Posterior cingulate gyrus (tissue), 11 donors: ENCODE measurements at regions of chr11 and their contacts with region 1.

Region 1: GRCh38 chr11:68030318-68031138 is at the start of gene NDUFS8:
- DNase-seq: peak; percentile 90 to 99 (median 98)

Region 2: GRCh38 chr11:67665541-67666362 is 364.8 kb before region 1 on chr11:
- intact Hi-C with region 1: no loop called
- DNase-seq: peak in 1 of 10 donors; percentile 60

Region 3: DNA sequence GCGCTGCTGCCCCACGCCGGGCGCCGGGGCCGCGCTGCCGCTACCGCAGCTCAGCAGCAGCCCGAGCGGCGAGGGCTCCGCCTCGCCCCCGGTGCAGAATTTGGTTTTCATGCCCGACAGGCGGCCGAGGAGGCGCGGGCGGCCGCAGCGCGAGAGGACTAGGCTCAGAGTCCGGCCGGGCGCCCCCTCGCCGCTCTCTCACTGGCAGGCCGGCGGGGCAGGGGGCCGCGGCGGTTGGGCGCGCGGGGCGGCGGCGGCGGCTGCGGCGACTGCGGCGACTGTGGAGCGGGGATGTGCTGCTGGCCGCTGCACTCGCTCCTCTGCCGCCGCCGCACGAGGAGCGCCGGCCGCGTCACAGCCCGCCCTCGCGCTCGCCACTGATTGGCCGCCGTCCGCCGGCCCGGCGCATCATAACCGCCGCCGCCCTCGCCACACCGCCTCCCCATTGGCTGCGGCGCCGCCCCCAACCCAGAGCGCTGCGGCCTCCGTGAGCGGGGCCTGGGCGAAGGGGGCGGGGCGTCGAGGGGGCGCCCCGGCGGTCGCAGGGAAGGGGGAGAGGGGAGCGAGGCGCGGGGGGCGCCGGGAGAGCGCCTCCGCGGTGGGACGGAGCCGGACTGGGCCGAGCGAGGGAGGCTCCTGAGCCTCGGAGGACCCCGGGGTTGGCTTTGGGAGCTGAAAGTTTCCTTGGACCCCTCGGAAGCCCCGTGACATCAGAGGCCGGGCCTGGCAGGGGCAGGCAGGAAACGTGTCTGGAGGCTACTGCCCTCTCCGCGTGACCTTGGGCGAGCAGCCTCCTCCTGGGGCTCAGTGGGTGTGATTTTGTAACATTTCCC is 90.8 kb after region 1 on chr11 and contains the start of gene CHKA:
- intact Hi-C with region 1: loop called (anchors 10 kb)
- DNase-seq: peak; percentile 85 to 99 (median 94)

Region 4: DNA sequence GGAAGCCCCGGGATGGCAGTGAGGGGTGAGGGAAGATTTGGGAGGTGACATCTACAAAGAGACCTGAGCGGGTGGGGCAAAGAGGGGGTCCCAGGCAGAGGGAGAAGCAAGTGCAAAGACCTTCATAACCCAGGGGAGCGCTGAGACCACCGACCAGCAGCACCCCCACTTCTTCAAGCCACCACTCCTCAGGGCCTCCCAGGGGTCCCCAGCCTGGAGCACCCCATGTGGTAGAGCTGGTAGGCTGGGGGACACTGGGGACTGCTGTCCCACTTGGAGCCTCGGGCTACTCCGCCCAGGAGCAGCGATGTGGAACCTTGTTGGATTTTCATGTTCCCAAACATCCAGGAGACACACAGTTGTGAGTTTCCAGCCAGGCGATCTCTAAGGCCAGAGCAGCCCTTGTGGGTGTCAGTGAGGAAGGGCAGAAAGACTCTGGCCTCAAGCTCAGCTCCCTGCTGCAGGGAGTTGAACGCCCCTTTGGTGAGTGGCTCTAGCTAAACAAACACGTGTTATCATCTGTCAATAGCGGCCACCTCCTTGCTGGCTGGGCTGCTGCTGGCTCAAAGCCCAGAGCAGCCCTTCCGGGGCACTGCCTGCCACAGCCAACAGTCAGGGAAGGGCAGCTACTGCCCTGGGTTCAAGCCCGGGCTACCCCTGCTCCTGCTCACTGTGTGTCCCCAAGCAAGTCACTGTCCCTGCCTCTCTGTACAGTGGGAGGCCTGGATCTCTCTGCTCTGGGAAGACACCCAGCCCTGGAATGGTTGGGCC is 116.4 kb after region 1 on chr11:
- intact Hi-C with region 1: no loop called
- DNase-seq: peak in 4 of 10 donors; percentile 34 to 84 (median 60)

Region 5: DNA sequence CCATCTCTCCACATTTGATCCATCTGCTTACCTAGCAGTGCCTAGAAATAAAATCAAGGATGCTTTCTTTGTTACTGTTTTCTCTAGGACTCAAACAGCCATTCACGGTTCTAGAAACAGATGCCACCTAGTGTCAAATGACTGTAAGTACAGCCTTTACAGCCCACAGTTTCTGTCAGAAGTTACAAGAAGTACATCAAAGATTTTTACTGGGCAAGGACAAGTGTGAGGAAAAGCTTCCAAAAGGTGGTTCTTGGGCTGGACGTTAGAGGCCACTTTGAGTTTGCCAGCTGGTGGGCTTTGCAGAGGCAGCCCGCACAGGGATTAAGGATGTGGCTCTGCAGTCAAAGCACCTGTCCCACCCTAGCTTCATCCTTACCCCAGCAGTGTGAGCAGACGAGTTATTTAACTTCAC is 175.7 kb after region 1 on chr11:
- intact Hi-C with region 1: loop called (anchors 5 kb)
- DNase-seq: no peak